B cell (primary cell): ENCODE measurements at regions of chrX and their contacts with region 1.

Region 1: DNA sequence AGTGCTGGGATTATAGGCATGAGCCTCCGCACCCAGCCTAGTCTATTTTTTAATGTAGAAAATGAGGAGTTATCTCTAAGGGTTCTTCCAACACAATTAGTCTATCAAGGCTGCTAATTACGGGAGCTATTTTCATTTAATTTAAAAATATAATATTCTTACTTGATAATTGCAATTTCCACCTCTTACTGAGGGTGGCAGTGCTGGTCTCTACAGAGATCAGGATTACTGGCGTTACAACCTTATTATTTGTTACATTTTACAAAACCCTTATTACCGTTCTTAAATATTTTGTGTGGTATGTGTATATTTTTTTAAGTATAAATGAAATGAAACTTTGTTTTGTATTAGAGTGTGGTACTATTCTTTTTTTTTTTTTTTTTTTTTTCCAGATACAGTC is 17.6 kb upstream of the GK start:
- DNase-seq: no peak
- ATAC-seq: no peak
- H3K4me3 ChIP-seq: no peak overlapping the region
- H3K4me3 Mint-ChIP-seq: no peak overlapping the region
- H3K27ac ChIP-seq: no peak overlapping the region
- H3K27ac Mint-ChIP-seq: no peak overlapping the region
- H3K4me1 ChIP-seq: peaks cover 4 to 6% of the 10 kb centered on the region in 2 donors
- H3K4me1 Mint-ChIP-seq: peaks cover 5% of the 10 kb centered on the region
- H3K27me3 ChIP-seq: no peaks in the 10 kb centered on the region
- H3K27me3 Mint-ChIP-seq: no peaks in the 10 kb centered on the region
- CTCF ChIP-seq: peak; percentile 27

Region 2: GRCh38 chrX:30441554-30441953 is 194.1 kb before region 1 on chrX:
- CTCF ChIA-PET with region 1: no interaction called
- POLR2A ChIA-PET with region 1: no interaction called
- intact Hi-C with region 1: loop called (anchors 5 kb)
- DNase-seq: no peak
- ATAC-seq: no peak
- H3K4me3 ChIP-seq: no peak overlapping the region
- H3K4me3 Mint-ChIP-seq: no peak overlapping the region
- H3K27ac ChIP-seq: no peak overlapping the region
- H3K27ac Mint-ChIP-seq: no peak overlapping the region
- H3K4me1 ChIP-seq: no peaks in the 10 kb centered on the region
- H3K4me1 Mint-ChIP-seq: no peaks in the 10 kb centered on the region
- H3K27me3 ChIP-seq: no peaks in the 10 kb centered on the region
- H3K27me3 Mint-ChIP-seq: peaks cover 4% of the 10 kb centered on the region
- CTCF ChIP-seq: no peak

Region 3: DNA sequence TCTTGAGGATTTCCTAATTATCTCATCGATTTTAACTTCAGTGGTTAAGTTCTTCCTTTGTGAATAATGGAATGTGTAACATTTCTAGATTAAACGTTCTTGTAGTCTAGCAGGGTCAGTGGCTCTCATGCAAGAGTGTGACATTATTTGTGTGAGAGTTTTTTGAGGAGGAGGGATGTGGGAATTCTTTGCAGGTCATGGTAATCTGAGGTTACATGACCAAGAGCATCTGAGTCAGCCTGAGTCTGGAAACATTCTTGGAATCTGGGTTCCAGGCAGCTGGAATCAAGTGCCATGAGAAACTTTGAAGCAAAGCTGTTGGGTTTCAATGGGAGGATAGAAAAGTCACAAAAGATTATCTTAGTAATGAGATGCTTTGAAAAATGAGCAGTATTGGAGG is 67.1 kb after region 1 on chrX:
- CTCF ChIA-PET with region 1: no interaction called
- POLR2A ChIA-PET with region 1: no interaction called
- intact Hi-C with region 1: no loop called
- DNase-seq: no peak
- ATAC-seq: no peak
- H3K4me3 ChIP-seq: no peak overlapping the region
- H3K4me3 Mint-ChIP-seq: no peak overlapping the region
- H3K27ac ChIP-seq: no peak overlapping the region
- H3K27ac Mint-ChIP-seq: no peak overlapping the region
- H3K4me1 ChIP-seq: no peaks in the 10 kb centered on the region
- H3K4me1 Mint-ChIP-seq: no peaks in the 10 kb centered on the region
- H3K27me3 ChIP-seq: no peaks in the 10 kb centered on the region
- H3K27me3 Mint-ChIP-seq: no peaks in the 10 kb centered on the region
- CTCF ChIP-seq: no peak

Region 4: DNA sequence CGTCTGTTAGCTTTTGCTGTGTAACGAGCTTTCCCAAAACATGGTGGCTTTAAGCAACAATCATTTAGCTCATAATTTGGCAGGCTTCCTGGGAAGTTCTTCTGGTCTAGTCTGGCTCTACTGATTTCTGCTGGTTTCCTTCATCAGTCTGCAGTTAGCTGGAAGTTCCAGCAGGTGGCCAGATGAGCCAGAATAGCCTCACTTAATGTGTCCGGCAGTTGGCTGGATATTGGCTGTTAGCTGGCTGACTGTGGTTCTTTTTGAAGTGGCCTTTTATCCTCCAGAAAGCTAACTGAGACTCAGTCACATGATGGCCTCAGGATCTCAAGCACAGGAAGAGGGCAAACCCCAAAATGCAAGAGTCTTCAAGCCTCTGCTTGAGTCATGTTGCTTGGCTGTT is 401.3 kb after region 1 on chrX:
- CTCF ChIA-PET with region 1: no interaction called
- POLR2A ChIA-PET with region 1: no interaction called
- intact Hi-C with region 1: no loop called
- DNase-seq: peak; percentile 26
- ATAC-seq: peak; percentile 39
- H3K4me3 ChIP-seq: no peak overlapping the region
- H3K4me3 Mint-ChIP-seq: no peak overlapping the region
- H3K27ac ChIP-seq: no peak overlapping the region
- H3K27ac Mint-ChIP-seq: no peak overlapping the region
- H3K4me1 ChIP-seq: no peaks in the 10 kb centered on the region
- H3K4me1 Mint-ChIP-seq: no peaks in the 10 kb centered on the region
- H3K27me3 ChIP-seq: no peaks in the 10 kb centered on the region
- H3K27me3 Mint-ChIP-seq: peaks cover 12% of the 10 kb centered on the region
- CTCF ChIP-seq: peak; percentile 63